H1 (cell line): ENCODE measurements at regions of chr1 and their contacts with region 1.

Region 1: DNA sequence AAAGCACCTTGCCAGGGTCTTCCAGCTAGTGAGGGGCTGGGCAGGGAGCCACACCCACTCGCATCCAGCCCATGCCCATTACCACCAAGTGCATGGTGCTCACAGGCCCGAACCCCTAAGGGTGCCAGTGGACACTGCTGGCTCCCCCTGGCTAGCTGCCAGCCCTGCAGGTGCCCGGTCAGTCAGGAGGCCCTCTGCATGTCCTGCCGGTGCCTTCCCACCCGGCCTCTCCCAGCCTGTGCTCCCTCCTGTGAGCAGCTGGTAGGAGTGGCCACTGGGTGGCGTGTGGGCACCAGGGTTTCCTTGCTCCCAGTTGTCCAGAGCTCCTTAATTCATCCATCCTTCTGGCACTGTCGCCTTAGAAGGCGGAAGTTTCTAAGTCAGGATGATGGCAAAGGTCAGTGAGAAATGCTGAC is 33.4 kb downstream of the QSOX1 start:
- DNase-seq: peak in 1 of 2 experiments; percentile 81
- H3K4me3 ChIP-seq: no peak overlapping the region
- H3K27ac ChIP-seq: no peak overlapping the region
- H3K4me1 ChIP-seq: no peaks in the 10 kb centered on the region
- H3K27me3 ChIP-seq: no peaks in the 10 kb centered on the region
- CTCF ChIP-seq: peak; percentile 87 to 94 (median 92)
- EP300 ChIP-seq: no peak
- POLR2A ChIP-seq: no peak
- RAD21 ChIP-seq: peak; percentile 94 to 96

Region 2: DNA sequence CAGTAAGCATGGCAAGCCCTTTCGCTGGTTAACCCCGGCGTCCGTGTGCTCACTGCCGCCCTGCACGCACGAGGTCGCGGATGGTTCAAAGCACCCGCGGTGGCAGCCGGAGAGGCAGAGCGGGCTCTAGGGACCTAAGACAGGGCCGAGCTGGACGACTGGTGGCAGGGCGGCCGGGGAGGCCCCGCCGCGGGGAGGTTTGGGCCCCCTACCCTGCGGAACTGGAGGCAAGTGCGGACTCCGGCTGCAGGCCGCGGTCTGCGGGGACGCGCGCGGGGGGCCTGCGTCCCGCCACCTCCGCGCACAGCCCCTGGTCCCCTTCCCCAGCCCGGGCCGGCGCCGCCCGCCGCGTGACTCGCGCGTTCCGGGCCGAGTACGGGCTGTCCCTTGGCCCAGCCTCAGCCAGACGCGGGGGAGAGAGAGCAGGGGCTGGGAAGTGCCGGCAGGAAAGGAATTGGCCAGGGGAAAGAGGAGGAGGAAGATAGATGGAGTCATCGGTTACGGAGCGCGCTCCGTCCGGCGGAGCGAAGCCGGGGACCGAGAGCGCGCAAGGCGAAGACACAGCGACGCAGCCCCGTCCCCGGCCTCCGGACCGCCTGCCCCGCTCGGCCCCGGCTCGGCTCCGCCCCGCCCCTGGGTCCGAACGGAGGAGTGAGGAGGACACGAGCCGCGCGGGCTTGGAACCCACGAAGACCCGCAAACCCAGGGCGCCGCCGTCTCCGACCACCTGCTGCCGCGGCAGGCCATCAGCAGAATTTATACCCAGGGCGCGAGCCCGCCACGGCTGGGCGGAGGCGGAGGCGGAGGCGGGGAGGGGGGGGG is 41.3 kb after region 1 on chr1:
- CTCF ChIA-PET with region 1: interaction called, 149 read pairs
- POLR2A ChIA-PET with region 1: interaction called, 10 read pairs
- DNase-seq: peak in 1 of 2 experiments; percentile 85
- H3K4me3 ChIP-seq: peak overlapping the region; percentile 45 to 67 (median 56)
- H3K27ac ChIP-seq: no peak overlapping the region
- H3K4me1 ChIP-seq: peaks cover 13 to 33% (median 21%) of the 10 kb centered on the region in 4 experiments
- H3K27me3 ChIP-seq: peaks cover 35 to 69% (median 55%) of the 10 kb centered on the region in 4 experiments
- CTCF ChIP-seq: no peak
- EP300 ChIP-seq: no peak
- POLR2A ChIP-seq: no peak
- RAD21 ChIP-seq: no peak

Region 3: GRCh38 chr1:180262572-180263488 is 74.7 kb after region 1 on chr1:
- CTCF ChIA-PET with region 1: interaction called, 15 read pairs
- POLR2A ChIA-PET with region 1: no interaction called
- DNase-seq: no peak
- H3K4me3 ChIP-seq: no peak overlapping the region
- H3K27ac ChIP-seq: no peak overlapping the region
- H3K4me1 ChIP-seq: peaks cover 0 to 13% (median 4%) of the 10 kb centered on the region in 4 experiments; a peak in 6 of 7 replicates
- H3K27me3 ChIP-seq: no peaks in the 10 kb centered on the region; a peak in 1 of 7 replicates
- CTCF ChIP-seq: no peak
- EP300 ChIP-seq: no peak
- POLR2A ChIP-seq: no peak
- RAD21 ChIP-seq: no peak

Region 4: GRCh38 chr1:180415985-180416633 is 228.0 kb after region 1 on chr1:
- CTCF ChIA-PET with region 1: interaction called, 19 read pairs
- POLR2A ChIA-PET with region 1: interaction called, 3 read pairs
- DNase-seq: no peak
- H3K4me3 ChIP-seq: no peak overlapping the region
- H3K27ac ChIP-seq: no peak overlapping the region
- H3K4me1 ChIP-seq: no peaks in the 10 kb centered on the region
- H3K27me3 ChIP-seq: no peaks in the 10 kb centered on the region
- CTCF ChIP-seq: peak in 2 of 3 experiments; percentile 39 to 63; a peak in 2 of 4 replicates
- EP300 ChIP-seq: no peak
- POLR2A ChIP-seq: no peak
- RAD21 ChIP-seq: peak; percentile 79 to 84

Region 5: GRCh38 chr1:180435566-180435965 is 247.5 kb after region 1 on chr1:
- CTCF ChIA-PET with region 1: no interaction called
- POLR2A ChIA-PET with region 1: no interaction called
- DNase-seq: no peak
- H3K4me3 ChIP-seq: no peak overlapping the region
- H3K27ac ChIP-seq: no peak overlapping the region
- H3K4me1 ChIP-seq: peaks cover 2 to 9% (median 7%) of the 10 kb centered on the region in 4 experiments; a peak in 4 of 7 replicates
- H3K27me3 ChIP-seq: no peaks in the 10 kb centered on the region
- CTCF ChIP-seq: no peak
- EP300 ChIP-seq: no peak
- POLR2A ChIP-seq: no peak
- RAD21 ChIP-seq: no peak